ENCODE measurements at regions of chr5 and their contacts with region 1.

Region 1: GRCh38 chr5:150350524-150351344 is 6.8 kb upstream of the TCOF1 start:
- H3K4me3 ChIP-seq: no peak overlapping the region
- H3K27ac ChIP-seq: no peak overlapping the region
- H3K4me1 ChIP-seq: no peaks in the 10 kb centered on the region
- CTCF ChIP-seq: peak; percentile 86

Region 2: DNA sequence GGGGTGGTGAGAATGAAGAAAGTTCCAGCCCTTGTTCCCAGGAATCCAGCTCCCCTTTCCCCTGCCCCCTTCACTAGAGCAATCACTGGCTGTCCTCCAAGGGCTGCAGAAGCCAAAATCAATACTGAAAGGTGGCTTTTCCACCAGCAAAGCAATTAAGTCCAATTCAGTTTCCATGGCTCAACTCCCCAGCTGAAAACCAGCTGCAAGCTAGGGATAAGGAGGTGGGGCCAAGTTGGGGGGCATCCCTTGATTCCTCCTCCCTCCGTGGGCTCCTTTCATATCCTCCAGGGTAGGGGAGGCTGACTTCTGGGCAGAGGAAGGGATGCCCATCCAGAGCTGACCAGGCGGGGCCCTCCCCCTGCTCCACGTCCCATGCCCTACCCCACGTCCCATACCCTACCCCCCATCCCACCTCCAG is 83.9 kb before region 1 on chr5:
- CTCF ChIA-PET with region 1: interaction called, 97 read pairs
- POLR2A ChIA-PET with region 1: no interaction called
- H3K4me3 ChIP-seq: no peak overlapping the region
- H3K27ac ChIP-seq: no peak overlapping the region
- H3K4me1 ChIP-seq: no peaks in the 10 kb centered on the region
- CTCF ChIP-seq: no peak

Region 3: DNA sequence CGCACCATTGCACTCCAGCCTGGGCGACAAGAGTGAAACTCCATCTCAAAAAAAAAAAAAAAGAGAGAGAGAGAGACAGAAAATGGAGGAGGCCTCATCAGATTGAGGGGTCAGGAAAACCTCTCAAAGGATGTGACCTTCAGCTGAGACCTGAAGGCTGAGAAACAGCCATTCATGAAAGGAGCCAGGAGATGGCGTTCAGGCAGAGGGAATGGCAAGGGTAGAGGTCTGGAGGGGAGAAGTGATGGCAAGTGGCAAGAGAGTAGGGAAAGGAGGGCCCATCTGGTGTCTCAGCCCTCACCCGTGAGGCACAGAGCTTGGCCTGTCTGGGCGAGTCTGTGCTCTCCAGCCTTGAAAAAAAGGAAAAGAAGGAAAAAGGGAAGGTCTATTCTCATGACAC is 78.2 kb before region 1 on chr5:
- CTCF ChIA-PET with region 1: interaction called, 97 read pairs
- POLR2A ChIA-PET with region 1: interaction called, 3 read pairs
- H3K4me3 ChIP-seq: no peak overlapping the region
- H3K27ac ChIP-seq: no peak overlapping the region
- H3K4me1 ChIP-seq: no peaks in the 10 kb centered on the region
- CTCF ChIP-seq: peak; percentile 84

Measured in HEK293 (cell line).